ENCODE measurements at regions of chr6 and their contacts with region 1.

Region 1: DNA sequence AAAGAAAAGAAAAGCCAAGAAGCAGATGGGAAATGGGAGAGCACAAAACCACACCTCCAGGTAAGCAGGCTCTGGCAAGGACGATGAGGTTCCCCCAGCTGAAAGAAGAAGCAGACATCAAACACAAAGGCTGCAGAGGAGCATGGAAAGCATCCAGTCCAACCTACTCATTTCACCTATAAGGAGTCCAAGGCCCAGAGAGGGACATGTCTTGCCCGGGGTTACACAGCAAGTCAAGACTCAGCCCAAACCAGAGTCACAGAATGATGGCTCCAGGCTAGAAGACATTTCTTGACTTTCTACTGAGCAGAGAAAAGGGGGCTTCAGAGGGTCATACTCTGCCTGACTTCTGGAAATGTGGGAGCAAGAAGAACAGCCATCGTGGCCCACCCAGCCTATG is 45.6 kb upstream of the FOXP4 start:
- DNase-seq: no peak
- ATAC-seq: no peak
- H3K4me3 ChIP-seq: no peak overlapping the region
- H3K27ac ChIP-seq: no peak overlapping the region
- H3K4me1 ChIP-seq: peaks cover 13% of the 10 kb centered on the region; the same call in 2 of the 3 replicates
- CTCF ChIP-seq: no peak
- EP300 ChIP-seq: no peak
- POLR2A ChIP-seq: no peak
- RAD21 ChIP-seq: no peak

Region 2: GRCh38 chr6:41519745-41520699 is 19.5 kb after region 1 on chr6:
- CTCF ChIA-PET with region 1: interaction called, 4 read pairs
- POLR2A ChIA-PET with region 1: interaction called, 12 read pairs
- DNase-seq: no peak
- ATAC-seq: no peak
- H3K4me3 ChIP-seq: no peak overlapping the region
- H3K27ac ChIP-seq: peak overlapping the region in 1 of 2 experiments; percentile 67; a peak in 3 of 6 replicates
- H3K4me1 ChIP-seq: peaks cover 13% of the 10 kb centered on the region
- CTCF ChIP-seq: no peak
- EP300 ChIP-seq: no peak
- POLR2A ChIP-seq: no peak
- RAD21 ChIP-seq: no peak

Measured in A549 (cell line).